ENCODE measurements at regions of chr6 and their contacts with region 1.

Region 1: GRCh38 chr6:27532820-27533538 is 60.1 kb upstream of the ZNF184 start:
- DNase-seq: no peak
- ATAC-seq: no peak

Region 2: GRCh38 chr6:27726620-27727023 is 193.6 kb after region 1 on chr6:
- intact Hi-C with region 1: loop called (anchors 5 kb)
- DNase-seq: no peak
- ATAC-seq: no peak

Region 3: GRCh38 chr6:28377879-28378278 is 844.9 kb after region 1 on chr6:
- intact Hi-C with region 1: loop called (anchors 5 kb)
- DNase-seq: no peak
- ATAC-seq: no peak

Measured in sciatic nerve (tissue), 2 donors.